Activated CD4-positive, alpha-beta memory T cell treated with anti-CD3 and anti-CD28 coated beads for 36 hours (primary cell): ENCODE measurements at regions of chr6 and their contacts with region 1.

Region 1: DNA sequence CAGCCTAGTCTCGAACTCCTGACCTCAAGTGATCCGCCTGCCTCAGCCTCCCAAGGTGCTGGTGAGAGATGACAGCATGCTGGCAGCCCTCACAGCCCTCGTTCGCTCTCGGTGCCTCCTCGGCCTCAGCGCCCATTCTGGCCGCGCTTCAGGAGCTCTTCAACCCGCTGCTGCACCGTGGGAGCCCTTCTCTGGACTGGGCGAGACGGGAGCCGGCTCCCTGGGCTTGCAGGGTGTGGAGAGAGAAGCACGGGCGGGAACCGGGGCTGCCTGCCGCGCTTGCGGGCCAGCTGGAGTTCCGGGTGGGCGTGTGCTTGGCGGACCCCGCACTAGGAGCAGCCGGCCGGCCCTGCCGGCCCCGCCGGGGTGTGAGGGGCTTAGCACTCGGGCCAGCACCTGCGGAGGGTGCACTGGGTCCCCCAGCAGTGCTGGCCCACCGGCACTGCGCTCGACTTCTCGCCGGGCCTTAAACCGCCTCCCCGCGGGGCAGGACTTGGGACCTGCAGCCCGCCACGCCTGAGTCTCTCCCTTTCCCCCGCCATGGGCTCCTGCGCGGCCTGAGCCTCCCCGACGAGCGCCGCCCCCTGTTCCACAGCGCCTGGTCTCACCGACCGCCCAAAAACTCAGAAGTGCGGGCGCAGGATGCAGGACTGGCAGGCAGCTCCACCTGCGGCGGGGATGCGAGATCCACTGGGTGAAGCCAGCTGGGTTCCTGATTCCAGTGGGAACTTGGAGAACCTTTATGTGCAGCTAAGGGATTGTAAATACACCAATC is 31.5 kb upstream of the RANBP9 start:
- DNase-seq: no peak
- H3K4me3 Mint-ChIP-seq: peak overlapping the region; percentile 53
- H3K27ac Mint-ChIP-seq: no peak overlapping the region
- H3K4me1 Mint-ChIP-seq: peaks cover 14% of the 10 kb centered on the region
- H3K27me3 Mint-ChIP-seq: no peaks in the 10 kb centered on the region

Region 2: DNA sequence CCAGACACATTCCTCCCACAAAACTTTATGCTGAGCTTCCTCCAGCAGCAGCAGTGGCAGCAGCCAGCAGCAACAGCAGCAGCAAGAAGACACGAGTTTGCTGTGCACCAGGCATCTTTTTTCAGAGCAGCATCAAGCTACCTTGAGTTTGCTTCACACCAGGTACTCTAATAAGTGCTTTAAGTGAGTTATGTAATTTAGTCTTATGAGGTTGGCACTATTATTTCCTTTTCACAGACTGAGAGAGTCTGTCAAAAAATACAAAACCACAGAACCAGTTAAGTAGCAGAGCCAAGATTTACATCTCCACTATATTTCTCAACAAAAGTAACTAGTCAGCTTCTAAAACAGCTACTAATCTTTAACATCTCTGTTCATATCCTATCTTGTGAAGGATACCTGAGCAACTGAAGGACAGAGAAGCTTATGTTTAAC is 55.2 kb before region 1 on chr6:
- CTCF ChIA-PET with region 1: no interaction called
- POLR2A ChIA-PET with region 1: no interaction called
- intact Hi-C with region 1: no loop called
- DNase-seq: no peak
- H3K4me3 Mint-ChIP-seq: no peak overlapping the region
- H3K27ac Mint-ChIP-seq: peak overlapping the region; percentile 66
- H3K4me1 Mint-ChIP-seq: peaks cover 59% of the 10 kb centered on the region
- H3K27me3 Mint-ChIP-seq: no peaks in the 10 kb centered on the region

Region 3: DNA sequence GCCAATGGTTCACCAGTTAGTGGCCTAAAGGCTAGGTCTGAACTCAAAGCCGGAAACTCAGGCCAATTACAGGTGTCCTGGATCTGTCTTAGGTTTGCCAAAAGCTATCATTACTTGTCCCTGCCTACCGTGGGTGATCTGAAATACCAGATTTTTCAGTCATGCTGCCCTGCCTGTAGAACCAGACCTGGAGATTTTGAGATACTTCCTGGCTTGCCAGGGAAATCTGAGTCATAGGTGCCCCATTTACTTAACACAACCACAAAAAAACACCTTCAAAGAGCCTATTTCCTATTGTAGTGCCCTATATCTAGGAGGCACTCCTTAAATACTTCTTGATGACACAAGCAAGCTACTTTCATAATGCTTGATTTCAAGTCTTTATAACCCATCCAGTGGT is 17.6 kb before region 1 on chr6:
- CTCF ChIA-PET with region 1: interaction called, 3 read pairs
- POLR2A ChIA-PET with region 1: no interaction called
- intact Hi-C with region 1: loop called (anchors 1 kb)
- DNase-seq: peak; percentile 58
- H3K4me3 Mint-ChIP-seq: peak overlapping the region; percentile 13
- H3K27ac Mint-ChIP-seq: peak overlapping the region; percentile 38
- H3K4me1 Mint-ChIP-seq: peaks cover 32% of the 10 kb centered on the region
- H3K27me3 Mint-ChIP-seq: no peaks in the 10 kb centered on the region